ENCODE measurements at regions of chr1 and their contacts with region 1.

Region 1: DNA sequence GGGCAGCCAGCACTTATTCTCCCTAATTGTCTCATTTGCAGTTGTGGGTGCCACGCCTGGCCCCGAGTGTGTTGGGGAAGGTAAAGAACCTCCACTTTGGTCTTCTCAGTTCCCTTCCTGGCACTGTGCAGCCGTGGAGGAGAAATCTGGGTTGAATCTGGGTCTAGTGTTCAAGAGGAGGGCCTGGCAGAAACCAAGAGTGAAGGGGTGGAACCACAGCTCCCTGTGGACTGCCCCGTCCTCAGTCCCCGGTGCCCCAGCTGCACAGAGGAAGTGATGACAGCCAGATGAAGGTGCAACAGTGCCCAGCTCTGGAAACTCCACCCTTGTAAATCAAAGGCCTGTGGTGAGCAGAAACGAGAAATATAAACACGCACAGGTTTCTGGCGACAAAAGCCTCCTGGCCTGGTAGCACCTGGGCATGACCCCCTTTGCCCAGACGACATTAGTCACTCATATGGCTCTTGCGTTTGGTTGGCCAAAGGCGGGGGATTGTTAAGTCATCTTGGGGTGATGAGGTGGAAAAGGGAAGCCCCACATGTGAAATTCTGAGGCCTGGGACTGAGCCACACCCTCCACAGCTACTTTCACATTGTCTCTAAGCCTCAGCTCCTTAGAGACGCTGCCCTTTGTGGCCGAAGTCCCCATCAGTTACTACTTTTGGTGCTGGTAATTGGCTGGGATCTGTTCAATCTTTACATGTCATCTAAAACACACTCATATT is 4.2 kb upstream of the ECE1 start:
- DNase-seq: peak; percentile 77 to 97 (median 90)
- H3K4me3 ChIP-seq: peak overlapping the region; percentile 78
- H3K4me3 Mint-ChIP-seq: peak overlapping the region; percentile 86 to 97 (median 92)
- H3K27ac ChIP-seq: peak overlapping the region; percentile 77
- H3K27ac Mint-ChIP-seq: peak overlapping the region; percentile 97 to 100 (median 99)
- H3K4me1 ChIP-seq: peaks cover 82% of the 10 kb centered on the region
- H3K4me1 Mint-ChIP-seq: peaks cover 71 to 90% (median 90%) of the 10 kb centered on the region in 3 donors
- H3K27me3 ChIP-seq: no peaks in the 10 kb centered on the region
- H3K27me3 Mint-ChIP-seq: peaks cover 0 to 2% of the 10 kb centered on the region in 2 donors

Region 2: GRCh38 chr1:21100481-21100921 is 193.9 kb before region 1 on chr1:
- CTCF ChIA-PET with region 1: no interaction called
- POLR2A ChIA-PET with region 1: no interaction called
- DNase-seq: no peak
- H3K4me3 ChIP-seq: no peak overlapping the region
- H3K4me3 Mint-ChIP-seq: no peak overlapping the region
- H3K27ac ChIP-seq: no peak overlapping the region
- H3K27ac Mint-ChIP-seq: peak overlapping the region in 2 of 8 donors; percentile 17 to 72
- H3K4me1 ChIP-seq: no peaks in the 10 kb centered on the region
- H3K4me1 Mint-ChIP-seq: peaks cover 0 to 5% (median 3%) of the 10 kb centered on the region in 3 donors
- H3K27me3 ChIP-seq: no peaks in the 10 kb centered on the region
- H3K27me3 Mint-ChIP-seq: no peaks in the 10 kb centered on the region

Region 3: DNA sequence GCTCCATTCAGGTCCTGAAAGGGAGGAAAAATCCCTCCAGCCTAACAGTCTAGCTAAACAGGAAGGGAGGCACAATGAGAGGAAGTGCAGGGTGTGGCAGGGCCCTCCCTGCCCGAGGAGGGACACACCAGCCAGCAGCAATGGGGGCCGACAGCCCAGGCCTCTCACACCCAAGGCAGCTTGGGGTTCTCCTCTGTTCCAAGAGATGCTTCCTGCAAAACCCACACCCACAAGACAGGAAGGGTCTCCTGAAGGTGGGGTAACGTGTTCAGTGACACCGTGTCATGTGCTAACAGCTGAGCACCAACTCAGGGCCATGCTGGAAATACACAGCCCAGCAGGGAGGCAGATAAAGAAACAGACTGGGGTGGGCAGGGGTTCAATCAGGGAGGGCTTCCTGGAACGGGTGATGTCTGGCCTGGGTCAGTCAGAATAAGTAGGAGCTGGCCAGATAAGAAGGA is 14.4 kb before region 1 on chr1:
- CTCF ChIA-PET with region 1: interaction called, 11 read pairs
- POLR2A ChIA-PET with region 1: interaction called, 22 read pairs
- DNase-seq: peak in 3 of 5 donors; percentile 15 to 20 (median 16)
- H3K4me3 ChIP-seq: peak overlapping the region; percentile 33
- H3K4me3 Mint-ChIP-seq: peak overlapping the region; percentile 9 to 84 (median 73)
- H3K27ac ChIP-seq: peak overlapping the region; percentile 12
- H3K27ac Mint-ChIP-seq: peak overlapping the region; percentile 83 to 97 (median 94)
- H3K4me1 ChIP-seq: peaks cover 33% of the 10 kb centered on the region
- H3K4me1 Mint-ChIP-seq: peaks cover 45 to 59% (median 46%) of the 10 kb centered on the region in 3 donors
- H3K27me3 ChIP-seq: no peaks in the 10 kb centered on the region
- H3K27me3 Mint-ChIP-seq: no peaks in the 10 kb centered on the region

Region 4: GRCh38 chr1:21324368-21325141 is 30.1 kb after region 1 on chr1:
- CTCF ChIA-PET with region 1: interaction called, 20 read pairs
- POLR2A ChIA-PET with region 1: interaction called, 13 read pairs
- DNase-seq: peak in 4 of 5 donors; percentile 22 to 62 (median 44)
- H3K4me3 ChIP-seq: peak overlapping the region; percentile 16
- H3K4me3 Mint-ChIP-seq: peak overlapping the region; percentile 38 to 91 (median 79)
- H3K27ac ChIP-seq: no peak overlapping the region
- H3K27ac Mint-ChIP-seq: peak overlapping the region; percentile 82 to 95 (median 91)
- H3K4me1 ChIP-seq: peaks cover 61% of the 10 kb centered on the region
- H3K4me1 Mint-ChIP-seq: peaks cover 47 to 81% (median 73%) of the 10 kb centered on the region in 3 donors
- H3K27me3 ChIP-seq: no peaks in the 10 kb centered on the region
- H3K27me3 Mint-ChIP-seq: no peaks in the 10 kb centered on the region

Region 5: DNA sequence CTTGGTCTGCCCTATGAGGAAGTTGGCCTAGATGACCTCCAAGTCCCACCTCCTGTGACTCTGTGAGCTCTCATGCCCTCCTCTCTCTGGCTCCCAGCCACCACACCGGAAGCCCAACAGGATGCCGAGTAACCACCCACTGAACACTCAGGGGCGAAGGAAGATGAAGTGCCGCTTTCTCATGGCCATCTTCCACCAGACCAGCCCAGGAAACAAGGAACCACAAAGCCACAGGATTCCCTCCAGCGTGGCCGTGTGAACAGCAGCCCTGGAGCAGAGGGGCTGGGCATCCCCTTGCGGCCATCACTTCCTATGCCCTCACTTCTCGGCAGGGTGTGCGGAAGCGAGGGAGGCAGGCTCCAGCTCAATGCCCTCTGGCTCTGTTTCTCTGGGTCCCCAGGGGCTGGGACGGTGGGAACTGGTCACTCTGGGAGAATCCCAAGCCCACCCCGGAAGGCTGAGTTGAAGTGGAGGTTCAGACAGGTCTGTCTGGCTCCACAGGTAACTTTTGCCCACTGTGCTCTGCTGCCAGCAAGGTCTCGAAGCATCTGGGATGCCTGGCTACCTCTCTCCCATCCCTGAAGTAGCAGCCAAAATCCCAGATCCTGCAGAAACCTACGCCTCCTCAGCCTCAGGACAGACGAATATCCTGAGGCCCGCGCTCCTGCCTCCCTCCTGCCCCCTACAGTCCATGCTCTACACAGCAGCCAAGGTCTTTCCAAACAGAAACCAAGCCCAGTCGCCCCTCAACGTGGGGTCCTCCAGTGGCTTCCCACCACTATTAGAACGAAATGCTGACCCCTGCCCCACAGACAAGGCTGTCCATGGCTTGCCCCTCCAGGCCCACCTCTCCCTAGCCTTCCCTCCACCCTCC is 40.0 kb after region 1 on chr1:
- CTCF ChIA-PET with region 1: interaction called, 49 read pairs
- POLR2A ChIA-PET with region 1: interaction called, 44 read pairs
- DNase-seq: peak; percentile 74 to 91 (median 90)
- H3K4me3 ChIP-seq: peak overlapping the region; percentile 51
- H3K4me3 Mint-ChIP-seq: peak overlapping the region; percentile 76 to 91 (median 87)
- H3K27ac ChIP-seq: peak overlapping the region; percentile 69
- H3K27ac Mint-ChIP-seq: peak overlapping the region; percentile 91 to 99 (median 98)
- H3K4me1 ChIP-seq: peaks cover 84% of the 10 kb centered on the region
- H3K4me1 Mint-ChIP-seq: peaks cover 66 to 89% (median 84%) of the 10 kb centered on the region in 3 donors
- H3K27me3 ChIP-seq: no peaks in the 10 kb centered on the region
- H3K27me3 Mint-ChIP-seq: no peaks in the 10 kb centered on the region

Region 6: GRCh38 chr1:21344750-21345443 is 50.5 kb after region 1 on chr1:
- CTCF ChIA-PET with region 1: interaction called, 17 read pairs
- POLR2A ChIA-PET with region 1: interaction called, 19 read pairs
- DNase-seq: peak in 1 of 5 donors; percentile 55
- H3K4me3 ChIP-seq: peak overlapping the region; percentile 93
- H3K4me3 Mint-ChIP-seq: peak overlapping the region; percentile 86 to 91 (median 88)
- H3K27ac ChIP-seq: peak overlapping the region; percentile 59
- H3K27ac Mint-ChIP-seq: peak overlapping the region; percentile 61 to 93 (median 82)
- H3K4me1 ChIP-seq: peaks cover 53% of the 10 kb centered on the region
- H3K4me1 Mint-ChIP-seq: peaks cover 37 to 45% (median 41%) of the 10 kb centered on the region in 3 donors
- H3K27me3 ChIP-seq: no peaks in the 10 kb centered on the region
- H3K27me3 Mint-ChIP-seq: no peaks in the 10 kb centered on the region

Measured in CD8-positive, alpha-beta memory T cell (primary cell).